Heart left ventricle (tissue), 16 donors: ENCODE measurements at regions of chr19 and their contacts with region 1.

Region 1: GRCh38 chr19:42455621-42456081 is 12.9 kb upstream of the CXCL17 start:
- DNase-seq: no peak
- ATAC-seq: peak in 3 of 4 donors; percentile 52 to 72 (median 60)
- H3K4me3 ChIP-seq: no peak overlapping the region
- H3K27ac ChIP-seq: no peak overlapping the region
- H3K4me1 ChIP-seq: peaks cover 0 to 18% (median 0%) of the 10 kb centered on the region in 12 donors
- H3K27me3 ChIP-seq: no peaks in the 10 kb centered on the region
- CTCF ChIP-seq: no peak
- POLR2A ChIP-seq: no peak

Region 2: DNA sequence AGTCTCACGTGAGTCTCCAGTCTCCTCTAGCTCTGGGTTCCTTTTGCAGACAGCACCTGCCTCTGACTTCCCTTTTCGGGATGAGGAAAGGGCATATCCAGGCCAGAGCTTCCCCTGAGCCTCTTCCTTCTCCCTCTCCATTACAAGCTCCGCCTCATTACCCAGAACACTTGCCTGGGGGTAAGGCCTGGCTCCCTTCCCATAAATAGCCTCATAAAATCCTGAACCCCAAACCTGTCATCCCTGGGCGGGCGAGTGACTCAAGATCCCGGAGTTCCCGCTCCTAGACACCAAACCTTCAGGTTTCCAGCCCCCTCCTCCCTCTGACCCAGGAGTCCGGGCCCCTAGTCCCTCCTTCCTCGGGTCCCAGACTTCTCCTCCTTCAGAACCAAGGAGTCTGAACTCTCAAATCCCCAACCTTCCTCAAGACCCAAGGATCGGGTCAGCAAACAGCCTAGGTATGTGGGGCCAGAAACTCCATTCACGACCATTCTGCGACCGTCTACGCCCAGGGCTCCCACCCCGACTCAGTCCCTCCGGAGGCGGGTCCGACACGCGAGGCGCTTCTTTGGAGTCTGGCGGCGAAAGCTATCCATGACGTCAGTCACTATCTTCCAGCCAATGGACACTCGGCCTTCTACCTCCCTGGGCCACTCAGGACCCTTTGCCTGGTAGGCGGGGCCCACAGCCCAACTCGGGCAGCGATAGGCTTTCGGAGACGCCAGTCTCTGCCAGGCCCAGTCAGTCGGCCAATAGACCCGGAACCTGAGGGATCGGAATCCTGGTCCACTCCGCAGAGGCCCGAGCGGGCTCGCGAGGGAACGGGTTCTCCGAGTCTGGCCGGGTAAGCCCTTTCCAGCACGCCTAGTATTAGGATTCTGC is 59.0 kb before region 1 on chr19:
- intact Hi-C with region 1: no loop called
- DNase-seq: peak; percentile 98 to 99 (median 99)
- ATAC-seq: peak; percentile 96 to 98 (median 98)
- H3K4me3 ChIP-seq: peak overlapping the region; percentile 37 to 71 (median 60)
- H3K27ac ChIP-seq: peak overlapping the region in 11 of 12 donors; percentile 60 to 90 (median 80)
- H3K4me1 ChIP-seq: peaks cover 6 to 30% (median 22%) of the 10 kb centered on the region in 12 donors
- H3K27me3 ChIP-seq: no peaks in the 10 kb centered on the region
- CTCF ChIP-seq: no peak
- POLR2A ChIP-seq: peak in 1 of 2 donors; percentile 90

Region 3: DNA sequence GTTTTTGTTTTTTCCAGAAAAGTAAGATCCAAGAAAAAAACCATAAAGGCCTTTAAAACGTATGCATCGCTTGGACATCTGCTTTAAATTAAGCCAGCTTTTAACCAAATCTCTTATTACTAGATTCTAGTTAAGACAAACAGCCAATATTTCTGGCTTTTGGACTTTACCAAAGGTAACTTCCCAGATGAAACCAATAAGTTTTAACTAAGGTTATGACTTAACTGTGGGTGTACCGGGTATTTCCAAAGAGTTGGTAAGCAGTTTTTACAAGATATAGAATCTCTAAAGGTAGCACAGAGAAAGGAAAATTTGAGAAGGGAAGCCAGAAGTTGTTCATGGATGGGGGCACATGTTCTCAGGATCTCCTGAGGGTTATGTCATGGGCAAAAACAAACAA is 38.7 kb after region 1 on chr19:
- intact Hi-C with region 1: loop called in 1 of 10 experiments (anchors 5 kb)
- DNase-seq: no peak
- ATAC-seq: no peak
- H3K4me3 ChIP-seq: no peak overlapping the region
- H3K27ac ChIP-seq: no peak overlapping the region
- H3K4me1 ChIP-seq: peaks cover 0 to 32% (median 13%) of the 10 kb centered on the region in 12 donors
- H3K27me3 ChIP-seq: no peaks in the 10 kb centered on the region
- CTCF ChIP-seq: no peak
- POLR2A ChIP-seq: no peak